ENCODE measurements at regions of chr2 and their contacts with region 1.

Region 1: DNA sequence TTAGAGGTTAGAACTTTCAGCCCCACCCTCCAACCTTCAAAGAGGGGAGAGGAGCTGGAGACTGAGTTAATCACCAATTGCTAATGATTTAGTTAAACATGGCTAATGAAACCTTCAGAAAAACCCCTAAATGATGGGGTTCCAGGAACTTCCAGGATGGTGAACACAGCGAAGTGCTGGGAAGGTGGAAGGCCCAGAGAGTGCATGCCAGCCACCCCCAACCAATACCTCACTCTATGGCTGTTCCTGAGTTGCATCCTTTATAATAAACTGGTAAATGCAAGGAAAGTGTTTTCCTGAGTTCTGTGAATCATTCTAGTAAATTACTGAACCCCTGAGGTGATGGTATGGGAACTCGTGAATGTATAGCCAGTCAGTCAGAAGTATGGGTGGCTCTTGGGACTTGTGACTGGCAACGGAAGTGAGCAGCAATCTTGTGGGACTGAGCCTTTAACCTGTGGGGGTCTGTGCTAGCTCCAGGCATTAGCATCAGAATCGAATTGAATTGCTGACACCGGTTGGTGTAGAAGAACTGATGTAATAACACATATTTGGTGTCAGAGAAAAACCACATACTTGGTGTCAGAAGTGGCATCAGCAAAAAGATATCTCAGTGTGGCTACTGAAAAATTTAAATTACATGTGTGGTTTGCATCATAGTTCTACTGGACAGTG is 37.4 kb downstream of the NPHP1 start:
- DNase-seq: no peak
- H3K4me3 ChIP-seq: no peak overlapping the region
- H3K27ac ChIP-seq: no peak overlapping the region
- H3K4me1 ChIP-seq: peaks cover 10% of the 10 kb centered on the region
- H3K27me3 ChIP-seq: no peaks in the 10 kb centered on the region
- CTCF ChIP-seq: no peak
- POLR2A ChIP-seq: no peak

Region 2: GRCh38 chr2:110157153-110157793 is 10.2 kb before region 1 on chr2:
- CTCF ChIA-PET with region 1: interaction called, 18 read pairs
- POLR2A ChIA-PET with region 1: no interaction called
- dilution Hi-C with region 1: no loop called
- intact Hi-C with region 1: no loop called
- DNase-seq: peak; percentile 78
- H3K4me3 ChIP-seq: no peak overlapping the region
- H3K27ac ChIP-seq: peak overlapping the region; percentile 82
- H3K4me1 ChIP-seq: peaks cover 29% of the 10 kb centered on the region
- H3K27me3 ChIP-seq: no peaks in the 10 kb centered on the region
- CTCF ChIP-seq: peak; percentile 68 to 74
- POLR2A ChIP-seq: no peak

Region 3: DNA sequence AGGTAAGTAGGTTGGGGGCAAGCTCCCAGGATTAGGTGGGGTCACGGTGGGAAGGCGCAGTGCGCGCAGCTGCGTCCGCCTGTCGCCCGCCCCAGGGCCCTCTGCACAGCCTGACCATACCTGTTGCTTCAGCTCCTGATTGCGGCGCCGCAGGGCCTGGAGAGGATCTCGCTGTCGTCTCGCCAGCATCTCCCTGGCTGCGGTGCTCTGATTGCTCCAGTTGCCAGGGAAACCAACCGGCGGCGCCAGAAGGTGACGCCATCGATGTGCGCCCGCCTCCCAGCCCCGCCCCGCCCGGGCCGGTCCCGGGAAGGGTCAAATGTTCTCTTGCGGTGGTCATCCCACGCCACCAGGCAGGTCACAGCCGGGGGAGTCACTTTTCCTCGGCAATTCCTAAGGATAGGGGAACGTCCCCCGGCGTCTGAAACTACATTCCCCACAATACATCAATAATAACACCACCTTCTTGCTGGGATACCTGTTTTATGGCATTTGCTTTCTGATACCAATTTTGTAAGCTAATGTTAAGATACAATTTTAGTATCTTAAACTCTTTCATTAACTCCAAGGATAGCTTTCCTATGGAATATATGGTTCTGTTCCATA is 37.4 kb after region 1 on chr2 and contains the start of gene NPHP1:
- CTCF ChIA-PET with region 1: no interaction called
- POLR2A ChIA-PET with region 1: no interaction called
- dilution Hi-C with region 1: no loop called
- intact Hi-C with region 1: loop called (anchors 5 kb)
- DNase-seq: peak; percentile 84
- H3K4me3 ChIP-seq: peak within 1 kb of the TSS; percentile 73 to 100 (median 91)
- H3K27ac ChIP-seq: peak within 1 kb of the TSS; percentile 52
- H3K4me1 ChIP-seq: peaks cover 12% of the 10 kb centered on the region
- H3K27me3 ChIP-seq: no peaks in the 10 kb centered on the region
- CTCF ChIP-seq: no peak
- POLR2A ChIP-seq: peak; percentile 82
- total RNA-seq, gene NPHP1: 5.9 and 6.1 TPM in 2 replicates

Region 4: GRCh38 chr2:110713513-110714362 is 546.3 kb after region 1 on chr2:
- CTCF ChIA-PET with region 1: no interaction called
- POLR2A ChIA-PET with region 1: no interaction called
- dilution Hi-C with region 1: no loop called
- intact Hi-C with region 1: no loop called
- DNase-seq: no peak
- H3K4me3 ChIP-seq: no peak overlapping the region
- H3K27ac ChIP-seq: no peak overlapping the region
- H3K4me1 ChIP-seq: no peaks in the 10 kb centered on the region
- H3K27me3 ChIP-seq: peaks cover 23 to 60% of the 10 kb centered on the region in 2 experiments
- CTCF ChIP-seq: no peak
- POLR2A ChIP-seq: no peak